B cell (primary cell): ENCODE measurements at regions of chrX and their contacts with region 1.

Region 1: DNA sequence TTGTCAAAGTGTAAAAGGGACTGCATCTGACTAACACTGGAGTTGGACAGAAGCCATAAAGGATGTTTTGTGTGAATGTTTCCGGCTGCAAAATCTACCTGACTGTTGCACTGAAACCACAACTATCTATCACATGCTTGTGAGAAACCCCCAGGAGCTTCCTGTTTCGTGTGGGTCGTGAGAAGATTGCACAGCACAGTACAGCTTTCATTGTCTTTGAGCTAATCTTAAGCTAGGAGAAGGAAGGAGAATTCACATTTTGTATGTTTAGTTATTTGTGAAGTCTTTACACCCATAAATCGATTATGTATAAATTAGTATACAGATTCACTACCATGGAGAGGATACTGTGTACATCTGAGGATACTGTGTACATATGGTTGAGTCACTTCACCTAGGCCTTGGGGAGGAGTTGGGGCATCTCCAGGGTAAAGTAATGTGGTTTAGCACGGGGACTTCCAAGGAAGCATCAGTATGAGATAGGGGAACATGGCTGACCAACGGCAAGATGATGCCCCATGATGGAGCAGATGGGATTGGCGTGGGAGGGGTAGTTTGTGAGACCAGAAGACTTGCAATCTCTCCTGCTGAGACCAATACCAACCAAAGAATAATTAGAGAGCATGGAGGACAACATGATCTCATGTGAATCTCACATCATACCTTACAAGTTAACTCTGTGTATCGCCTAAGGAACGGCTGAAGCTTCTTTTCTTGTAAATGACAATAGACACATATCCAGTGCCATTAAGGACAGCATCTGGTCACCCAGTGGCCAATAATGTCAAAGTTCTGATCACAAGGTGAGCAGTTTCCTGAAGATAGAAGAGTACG is 43.1 kb upstream of the FAM9C start:
- DNase-seq: peak; percentile 89
- ATAC-seq: peak; percentile 73
- H3K4me3 ChIP-seq: peak overlapping the region in 1 of 5 experiments; percentile 44
- H3K4me3 Mint-ChIP-seq: peak overlapping the region; percentile 55
- H3K27ac ChIP-seq: peak overlapping the region; percentile 98
- H3K27ac Mint-ChIP-seq: peak overlapping the region; percentile 99
- H3K4me1 ChIP-seq: peaks cover 90 to 91% of the 10 kb centered on the region in 2 donors
- H3K4me1 Mint-ChIP-seq: peaks cover 86% of the 10 kb centered on the region
- H3K27me3 ChIP-seq: no peaks in the 10 kb centered on the region
- H3K27me3 Mint-ChIP-seq: no peaks in the 10 kb centered on the region
- CTCF ChIP-seq: no peak

Region 2: DNA sequence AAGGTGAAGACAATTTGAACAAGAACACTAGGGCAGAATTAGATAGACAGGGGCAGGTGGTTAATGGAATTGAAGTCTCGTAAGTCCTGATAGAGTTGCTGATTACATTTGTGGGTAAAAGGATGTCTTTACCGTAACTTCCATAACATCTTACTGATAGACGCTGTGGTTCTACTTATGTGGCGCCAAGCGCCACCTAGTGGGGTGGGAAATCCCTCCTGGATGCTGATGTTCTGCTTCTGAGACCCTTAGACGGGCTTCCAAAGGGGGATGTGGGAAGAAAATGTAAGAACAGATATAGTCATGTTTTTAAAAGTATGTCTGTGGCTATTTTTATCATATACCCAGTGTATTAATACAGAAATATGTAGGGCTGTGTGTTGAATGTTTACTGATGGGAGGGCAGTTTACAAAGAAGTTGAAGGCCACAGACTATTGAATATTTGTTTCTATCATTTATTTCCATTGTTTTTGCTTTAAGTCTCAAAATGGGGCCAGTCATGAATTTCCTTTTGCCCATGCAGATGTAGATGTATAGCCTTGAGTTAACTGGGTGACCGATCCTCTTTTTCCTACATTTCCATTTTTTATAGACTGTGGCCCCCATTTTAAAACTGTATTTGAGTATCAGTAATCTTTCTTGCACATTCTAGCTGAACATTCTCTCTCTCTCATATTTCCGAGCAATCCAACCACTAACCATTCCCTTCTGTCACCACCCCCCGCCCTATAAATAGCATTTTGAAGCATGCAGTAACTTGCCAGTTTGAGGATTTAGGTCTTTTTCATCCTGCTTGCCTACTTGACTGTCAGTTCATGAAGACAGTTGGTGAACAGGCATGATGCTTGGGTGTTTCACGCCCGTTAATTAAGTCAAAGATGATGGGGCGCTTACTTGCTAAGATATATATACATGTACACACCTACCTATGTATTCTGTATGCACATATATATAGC is 193.2 kb before region 1 on chrX:
- CTCF ChIA-PET with region 1: no interaction called
- POLR2A ChIA-PET with region 1: no interaction called
- intact Hi-C with region 1: no loop called
- DNase-seq: peak; percentile 73
- ATAC-seq: peak; percentile 63
- H3K4me3 ChIP-seq: no peak overlapping the region
- H3K4me3 Mint-ChIP-seq: peak overlapping the region; percentile 57
- H3K27ac ChIP-seq: no peak overlapping the region
- H3K27ac Mint-ChIP-seq: no peak overlapping the region
- H3K4me1 ChIP-seq: peaks cover 44% of the 10 kb centered on the region in 2 donors
- H3K4me1 Mint-ChIP-seq: peaks cover 55% of the 10 kb centered on the region
- H3K27me3 ChIP-seq: no peaks in the 10 kb centered on the region
- H3K27me3 Mint-ChIP-seq: no peaks in the 10 kb centered on the region
- CTCF ChIP-seq: peak; percentile 76

Region 3: DNA sequence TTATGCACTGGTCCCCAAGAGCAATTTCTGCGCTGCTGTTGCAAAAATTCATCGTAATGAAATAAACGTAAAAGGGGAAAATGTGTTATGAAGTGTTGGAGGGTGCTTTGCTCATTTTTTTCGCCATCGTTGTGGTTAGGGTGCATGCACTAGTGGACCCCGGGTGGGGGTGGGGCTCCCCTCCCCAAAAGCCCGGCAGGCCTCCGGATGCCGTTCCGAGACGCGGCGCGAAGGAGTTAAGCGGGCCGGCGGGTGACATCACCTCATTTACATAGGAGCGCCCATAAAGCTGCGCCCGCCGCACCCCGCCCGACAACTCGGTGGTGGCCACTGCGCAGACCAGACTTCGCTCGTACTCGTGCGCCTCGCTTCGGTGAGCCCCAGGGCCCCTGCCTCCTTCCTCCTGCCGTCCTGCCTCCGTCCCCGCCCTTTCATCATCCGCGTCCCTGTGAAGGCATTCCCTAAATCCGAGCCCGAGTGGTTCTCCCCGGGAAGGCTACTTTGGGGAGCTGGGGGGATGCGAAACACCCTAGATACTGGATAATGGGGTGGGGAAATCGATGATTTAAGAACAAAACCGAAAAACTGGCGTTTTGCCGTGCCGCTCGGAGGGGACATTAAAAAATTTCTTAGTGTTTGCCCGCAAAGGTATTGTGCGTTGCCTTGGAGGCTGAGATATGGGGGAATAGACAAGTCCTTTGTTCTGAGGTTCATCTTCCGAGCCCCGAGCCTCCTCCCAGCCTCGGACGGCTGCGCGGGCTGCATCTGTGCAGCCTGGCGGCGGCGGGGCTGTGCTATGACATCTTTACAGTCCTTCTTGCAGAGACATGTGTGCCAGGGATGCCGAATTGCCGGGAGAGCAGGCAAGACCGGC is 112.5 kb before region 1 on chrX and contains the start of gene TMSB4X:
- CTCF ChIA-PET with region 1: interaction called, 74 read pairs
- POLR2A ChIA-PET with region 1: interaction called, 129 read pairs
- intact Hi-C with region 1: loop called (anchors 1 kb)
- DNase-seq: peak; percentile 89
- ATAC-seq: peak; percentile 59
- H3K4me3 ChIP-seq: peak within 1 kb of the TSS; percentile 85 to 93 (median 89)
- H3K4me3 Mint-ChIP-seq: peak within 1 kb of the TSS; percentile 99
- H3K27ac ChIP-seq: peak within 1 kb of the TSS; percentile 84 to 86
- H3K27ac Mint-ChIP-seq: peak within 1 kb of the TSS; percentile 98
- H3K4me1 ChIP-seq: peaks cover 49 to 52% of the 10 kb centered on the region in 2 donors
- H3K4me1 Mint-ChIP-seq: peaks cover 60% of the 10 kb centered on the region
- H3K27me3 ChIP-seq: no peaks in the 10 kb centered on the region
- H3K27me3 Mint-ChIP-seq: no peaks in the 10 kb centered on the region
- CTCF ChIP-seq: no peak
- total RNA-seq, gene TMSB4X: 2,468 and 2,550 TPM in 2 replicates

Region 4: DNA sequence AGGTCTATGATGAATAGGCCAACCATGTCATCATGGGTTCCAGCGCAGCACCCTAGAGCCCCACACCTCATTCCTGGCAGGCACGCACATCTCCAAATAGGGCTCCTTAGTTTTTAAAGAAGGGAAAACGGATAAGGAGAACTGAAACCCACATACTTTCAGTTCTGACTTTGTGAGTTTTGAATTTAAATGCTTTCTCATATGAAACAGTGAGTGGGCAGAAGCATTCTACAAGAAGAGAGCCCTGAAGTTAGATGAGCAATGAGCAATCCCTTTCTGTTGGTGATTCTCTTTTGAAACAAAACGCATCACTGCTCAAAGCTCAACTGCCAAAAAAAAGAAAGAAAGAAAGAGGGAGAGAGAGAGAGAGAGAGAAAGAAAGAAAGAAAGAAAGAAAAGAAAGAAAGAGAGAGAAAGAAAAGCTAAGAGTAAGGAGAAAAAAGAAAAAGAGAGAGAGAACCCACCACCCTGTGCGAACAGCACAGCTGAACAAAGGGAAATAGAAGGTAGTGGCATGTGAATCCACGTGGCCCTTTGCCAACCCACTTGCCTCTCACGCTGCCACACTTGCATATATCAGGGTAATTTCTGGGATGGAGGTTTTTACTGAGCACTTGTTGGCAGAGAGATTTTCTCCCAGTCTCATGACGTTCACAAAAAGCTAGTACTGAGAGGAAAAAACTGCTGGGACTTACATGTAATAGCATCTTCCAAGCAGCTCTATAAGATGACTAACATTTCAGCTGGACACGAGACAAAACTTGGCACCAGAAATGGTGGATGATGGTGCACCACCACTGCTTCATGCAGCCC is 81.7 kb before region 1 on chrX:
- CTCF ChIA-PET with region 1: interaction called, 21 read pairs
- POLR2A ChIA-PET with region 1: interaction called, 13 read pairs
- intact Hi-C with region 1: no loop called
- DNase-seq: peak; percentile 59
- ATAC-seq: peak; percentile 66
- H3K4me3 ChIP-seq: peak overlapping the region in 2 of 5 experiments; percentile 1 to 36
- H3K4me3 Mint-ChIP-seq: peak overlapping the region; percentile 82
- H3K27ac ChIP-seq: peak overlapping the region; percentile 51 to 52
- H3K27ac Mint-ChIP-seq: peak overlapping the region; percentile 89
- H3K4me1 ChIP-seq: peaks cover 82 to 85% of the 10 kb centered on the region in 2 donors
- H3K4me1 Mint-ChIP-seq: peaks cover 77% of the 10 kb centered on the region
- H3K27me3 ChIP-seq: peaks cover 0 to 5% (median 0%) of the 10 kb centered on the region in 4 experiments
- H3K27me3 Mint-ChIP-seq: no peaks in the 10 kb centered on the region
- CTCF ChIP-seq: no peak

Region 5: GRCh38 chrX:13059637-13060499 is 27.7 kb before region 1 on chrX:
- CTCF ChIA-PET with region 1: no interaction called
- POLR2A ChIA-PET with region 1: no interaction called
- intact Hi-C with region 1: no loop called
- DNase-seq: no peak
- ATAC-seq: no peak
- H3K4me3 ChIP-seq: no peak overlapping the region
- H3K4me3 Mint-ChIP-seq: no peak overlapping the region
- H3K27ac ChIP-seq: no peak overlapping the region
- H3K27ac Mint-ChIP-seq: no peak overlapping the region
- H3K4me1 ChIP-seq: peaks cover 8 to 9% of the 10 kb centered on the region in 2 donors
- H3K4me1 Mint-ChIP-seq: peaks cover 42% of the 10 kb centered on the region
- H3K27me3 ChIP-seq: no peaks in the 10 kb centered on the region
- H3K27me3 Mint-ChIP-seq: no peaks in the 10 kb centered on the region
- CTCF ChIP-seq: no peak

Region 6: GRCh38 chrX:13074297-13075262 is 13.0 kb before region 1 on chrX:
- CTCF ChIA-PET with region 1: interaction called, 25 read pairs
- POLR2A ChIA-PET with region 1: interaction called, 11 read pairs
- intact Hi-C with region 1: loop called (anchors 1 kb)
- DNase-seq: peak; percentile 78
- ATAC-seq: peak; percentile 96
- H3K4me3 ChIP-seq: peak overlapping the region in 2 of 5 experiments; percentile 11 to 13
- H3K4me3 Mint-ChIP-seq: peak overlapping the region; percentile 79
- H3K27ac ChIP-seq: peak overlapping the region; percentile 94 to 98
- H3K27ac Mint-ChIP-seq: peak overlapping the region; percentile 98
- H3K4me1 ChIP-seq: peaks cover 66 to 67% of the 10 kb centered on the region in 2 donors
- H3K4me1 Mint-ChIP-seq: peaks cover 53% of the 10 kb centered on the region
- H3K27me3 ChIP-seq: no peaks in the 10 kb centered on the region
- H3K27me3 Mint-ChIP-seq: no peaks in the 10 kb centered on the region
- CTCF ChIP-seq: no peak

Region 7: GRCh38 chrX:13341491-13342101 is 254.1 kb after region 1 on chrX:
- CTCF ChIA-PET with region 1: no interaction called
- POLR2A ChIA-PET with region 1: no interaction called
- intact Hi-C with region 1: loop called (anchors 10 kb)
- DNase-seq: no peak
- ATAC-seq: no peak
- H3K4me3 ChIP-seq: no peak overlapping the region
- H3K4me3 Mint-ChIP-seq: no peak overlapping the region
- H3K27ac ChIP-seq: no peak overlapping the region
- H3K27ac Mint-ChIP-seq: no peak overlapping the region
- H3K4me1 ChIP-seq: peaks cover 15 to 23% of the 10 kb centered on the region in 2 donors
- H3K4me1 Mint-ChIP-seq: peaks cover 19% of the 10 kb centered on the region
- H3K27me3 ChIP-seq: no peaks in the 10 kb centered on the region
- H3K27me3 Mint-ChIP-seq: no peaks in the 10 kb centered on the region
- CTCF ChIP-seq: no peak

Region 8: GRCh38 chrX:13487731-13488523 is 400.4 kb after region 1 on chrX:
- CTCF ChIA-PET with region 1: interaction called, 62 read pairs
- POLR2A ChIA-PET with region 1: interaction called, 13 read pairs
- intact Hi-C with region 1: loop called (anchors 1 kb)
- DNase-seq: peak; percentile 70
- ATAC-seq: no peak
- H3K4me3 ChIP-seq: no peak overlapping the region
- H3K4me3 Mint-ChIP-seq: peak overlapping the region; percentile 56
- H3K27ac ChIP-seq: peak overlapping the region; percentile 84 to 90
- H3K27ac Mint-ChIP-seq: peak overlapping the region; percentile 91
- H3K4me1 ChIP-seq: peaks cover 18 to 22% of the 10 kb centered on the region in 2 donors
- H3K4me1 Mint-ChIP-seq: peaks cover 22% of the 10 kb centered on the region
- H3K27me3 ChIP-seq: peaks cover 0 to 4% (median 0%) of the 10 kb centered on the region in 4 experiments
- H3K27me3 Mint-ChIP-seq: no peaks in the 10 kb centered on the region
- CTCF ChIP-seq: peak; percentile 63